ENCODE measurements at regions of chr12 and their contacts with region 1.

Region 1: DNA sequence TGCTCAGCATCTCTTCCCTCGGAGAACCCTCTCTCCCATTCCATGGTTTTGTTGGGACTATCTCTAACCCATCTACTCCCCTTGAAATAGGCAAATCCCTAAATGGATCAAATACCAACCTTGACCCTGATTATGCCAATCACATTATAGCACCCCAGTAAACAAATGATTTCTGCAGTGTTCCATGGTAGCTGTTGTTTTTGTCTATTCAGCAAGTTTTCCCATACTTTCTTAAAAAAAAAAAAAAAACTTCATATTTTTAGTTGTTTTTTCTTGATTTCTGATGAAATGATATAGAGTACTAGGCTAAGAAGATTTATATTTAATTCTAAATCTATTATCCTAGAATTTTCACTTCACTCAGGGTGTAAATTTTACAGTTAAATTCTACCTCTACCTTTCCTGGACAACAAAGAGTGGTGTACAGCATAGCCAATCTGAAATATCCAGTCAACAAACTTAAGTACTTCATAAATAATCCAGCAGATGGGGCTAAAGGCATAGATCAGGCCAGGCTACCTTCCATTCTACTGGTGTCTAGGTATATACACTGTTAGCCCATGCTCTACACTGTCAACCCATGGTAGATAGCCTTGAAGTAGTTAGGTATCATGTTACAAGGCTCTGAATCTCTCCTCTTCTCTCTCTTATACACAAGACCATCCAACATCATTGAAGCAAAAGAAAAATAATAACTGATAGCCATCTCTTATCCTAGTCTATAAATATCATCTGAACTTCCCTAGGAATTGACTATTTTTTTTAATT is 82.2 kb downstream of the PLEKHG7 start:
- DNase-seq: peak; percentile 70
- ATAC-seq: peak; percentile 99
- H3K4me3 ChIP-seq: no peak overlapping the region
- H3K27ac ChIP-seq: no peak overlapping the region
- H3K4me1 ChIP-seq: peaks cover 2% of the 10 kb centered on the region; the same call in 1 of the 2 replicates
- H3K27me3 ChIP-seq: no peaks in the 10 kb centered on the region
- CTCF ChIP-seq: peak; percentile 51 to 84 (median 57); a peak in 5 of 6 replicates
- EP300 ChIP-seq: no peak
- POLR2A ChIP-seq: no peak
- RAD21 ChIP-seq: peak; percentile 97

Region 2: GRCh38 chr12:92769124-92769901 is 15.7 kb before region 1 on chr12:
- CTCF ChIA-PET with region 1: interaction called, 13 read pairs
- POLR2A ChIA-PET with region 1: no interaction called
- RAD21 ChIA-PET with region 1: interaction called, 7 read pairs
- SMC1A ChIA-PET with region 1: interaction called, 15 read pairs
- in situ Hi-C with region 1: no loop called
- intact Hi-C with region 1: no loop called
- DNase-seq: no peak
- ATAC-seq: peak; percentile 86
- H3K4me3 ChIP-seq: no peak overlapping the region
- H3K27ac ChIP-seq: peak overlapping the region; percentile 45; the same call in 1 of the 2 replicates
- H3K4me1 ChIP-seq: peaks cover 17% of the 10 kb centered on the region
- H3K27me3 ChIP-seq: no peaks in the 10 kb centered on the region
- CTCF ChIP-seq: no peak
- EP300 ChIP-seq: peak in 1 of 2 experiments; percentile 64; a peak in 2 of 4 replicates
- POLR2A ChIP-seq: no peak
- RAD21 ChIP-seq: no peak

Region 3: DNA sequence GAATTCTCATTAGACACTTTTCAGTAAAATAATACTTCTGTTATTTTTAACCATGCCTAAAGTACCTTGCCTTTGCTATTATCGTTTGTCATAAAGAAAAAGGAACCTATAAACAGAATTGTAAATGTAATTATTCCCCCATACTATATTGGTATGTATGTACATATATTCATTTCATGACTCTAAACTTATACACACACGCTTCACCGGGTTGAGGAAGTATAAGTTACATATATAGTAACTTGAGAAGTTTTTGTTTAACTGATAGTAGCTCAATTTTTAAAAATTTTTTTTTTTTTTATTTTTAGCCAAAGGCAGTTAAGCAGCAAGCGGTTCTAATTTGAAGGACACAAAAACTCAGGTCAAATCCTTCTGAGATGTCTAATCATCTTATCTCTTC is 25.4 kb after region 1 on chr12:
- CTCF ChIA-PET with region 1: interaction called, 11 read pairs
- POLR2A ChIA-PET with region 1: no interaction called
- RAD21 ChIA-PET with region 1: interaction called, 5 read pairs
- SMC1A ChIA-PET with region 1: interaction called, 6 read pairs
- in situ Hi-C with region 1: no loop called
- intact Hi-C with region 1: no loop called
- DNase-seq: peak; percentile 13
- ATAC-seq: peak; percentile 89
- H3K4me3 ChIP-seq: no peak overlapping the region
- H3K27ac ChIP-seq: peak overlapping the region; percentile 77
- H3K4me1 ChIP-seq: peaks cover 8% of the 10 kb centered on the region; the same call in 1 of the 2 replicates
- H3K27me3 ChIP-seq: no peaks in the 10 kb centered on the region
- CTCF ChIP-seq: no peak
- EP300 ChIP-seq: 0 out of 4 replicates have a peak, but pooled peaks of 1 of the 2 experiments have one; percentile 16
- POLR2A ChIP-seq: no peak
- RAD21 ChIP-seq: no peak

Region 4: DNA sequence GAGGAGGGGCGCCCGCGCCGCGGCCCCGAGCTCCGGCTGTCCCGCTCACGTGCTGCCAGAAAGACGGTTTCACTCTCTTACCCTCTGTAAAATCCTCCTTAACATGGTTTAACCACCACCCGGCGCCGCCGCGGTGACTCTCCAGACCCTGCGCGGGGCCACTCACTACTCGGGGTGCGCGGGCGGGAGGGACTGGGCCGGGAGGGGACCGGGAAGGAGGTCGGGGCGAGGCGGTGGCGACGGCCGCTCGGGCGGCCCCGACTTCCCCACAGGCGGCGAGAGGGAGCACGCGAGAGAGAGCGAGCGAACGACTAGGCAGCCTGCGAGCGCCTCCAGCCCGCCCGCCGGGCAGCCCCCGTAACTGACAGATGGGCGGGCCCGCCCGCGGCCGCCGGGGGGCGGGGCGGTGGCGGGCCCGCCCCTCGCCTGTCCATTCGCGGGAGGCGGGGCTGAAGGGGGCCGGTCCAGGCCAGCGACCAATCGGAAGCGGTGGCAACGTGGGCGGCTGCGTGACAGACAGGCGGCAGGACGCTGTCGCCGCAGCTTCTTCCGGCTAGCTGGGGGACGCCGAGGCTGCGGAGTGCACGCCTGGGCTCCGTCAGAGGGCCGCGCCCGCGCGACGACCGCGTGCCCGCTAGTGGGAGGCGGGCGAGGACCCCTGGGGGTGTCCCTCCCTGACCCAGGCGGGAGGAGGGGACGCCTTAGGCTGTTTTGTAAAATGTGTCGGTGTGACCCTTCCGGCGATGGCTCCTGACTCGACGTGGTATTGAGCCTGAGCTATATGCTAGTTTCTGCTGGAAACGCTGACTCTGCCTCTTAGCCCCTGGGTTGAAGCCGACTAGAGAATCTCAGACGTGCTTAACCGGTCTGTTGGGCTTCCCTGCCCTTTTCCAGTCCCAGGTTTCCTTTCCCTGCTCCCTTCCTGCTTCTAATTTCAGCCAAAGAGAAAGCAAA is 144.3 kb after region 1 on chr12 and contains the start of gene EEA1:
- CTCF ChIA-PET with region 1: interaction called, 19 read pairs
- POLR2A ChIA-PET with region 1: interaction called, 4 read pairs
- RAD21 ChIA-PET with region 1: interaction called, 5 read pairs
- SMC1A ChIA-PET with region 1: interaction called, 13 read pairs
- in situ Hi-C with region 1: no loop called
- intact Hi-C with region 1: loop called (anchors 5 kb)
- DNase-seq: peak; percentile 84
- ATAC-seq: peak; percentile 87
- H3K4me3 ChIP-seq: peak within 1 kb of the TSS; percentile 79
- H3K27ac ChIP-seq: peak within 1 kb of the TSS; percentile 98
- H3K4me1 ChIP-seq: peaks cover 4% of the 10 kb centered on the region
- H3K27me3 ChIP-seq: no peaks in the 10 kb centered on the region
- CTCF ChIP-seq: peak in 2 of 3 experiments; percentile 29 to 31; a peak in 3 of 6 replicates
- EP300 ChIP-seq: peak; percentile 30 to 35; a peak in 2 of 4 replicates
- POLR2A ChIP-seq: peak; percentile 96
- RAD21 ChIP-seq: peak; percentile 16; the same call in 1 of the 2 replicates
- polyA plus RNA-seq, gene EEA1: 5.5 to 9.5 TPM

Region 5: DNA sequence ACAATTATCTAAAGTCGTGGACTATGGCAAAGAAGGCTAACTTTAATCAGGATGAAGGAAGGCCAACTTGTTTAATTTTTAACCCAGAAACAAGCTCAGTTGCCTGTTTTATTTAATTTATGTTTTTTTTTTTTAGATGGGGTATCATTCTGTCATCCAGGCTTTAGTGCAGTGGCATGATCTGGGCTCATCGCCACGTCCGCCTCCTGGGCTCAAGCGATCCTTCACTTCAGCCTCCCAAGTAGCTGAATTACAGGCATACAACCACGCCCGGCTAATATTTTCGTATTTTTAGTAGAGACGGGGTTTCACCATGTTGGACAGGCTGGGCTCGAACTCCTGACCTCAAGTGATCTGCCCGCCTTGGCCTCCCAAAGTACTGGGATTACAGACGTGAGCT is 612.4 kb after region 1 on chr12:
- CTCF ChIA-PET with region 1: interaction called, 13 read pairs
- POLR2A ChIA-PET with region 1: no interaction called
- RAD21 ChIA-PET with region 1: interaction called, 6 read pairs
- SMC1A ChIA-PET with region 1: interaction called, 20 read pairs
- in situ Hi-C with region 1: no loop called
- intact Hi-C with region 1: no loop called
- DNase-seq: no peak
- ATAC-seq: no peak
- H3K4me3 ChIP-seq: no peak overlapping the region
- H3K27ac ChIP-seq: no peak overlapping the region
- H3K4me1 ChIP-seq: no peaks in the 10 kb centered on the region; the same call in 1 of the 2 replicates
- H3K27me3 ChIP-seq: no peaks in the 10 kb centered on the region
- CTCF ChIP-seq: no peak
- EP300 ChIP-seq: no peak
- POLR2A ChIP-seq: no peak
- RAD21 ChIP-seq: no peak